Vagina (tissue), 2 donors: ENCODE measurements at regions of chr2 and their contacts with region 1.

Region 1: GRCh38 chr2:101520246-101520645 is 45.3 kb upstream of the RFX8 start:
- DNase-seq: no peak
- H3K4me3 ChIP-seq: no peak overlapping the region
- H3K27ac ChIP-seq: no peak overlapping the region
- H3K4me1 ChIP-seq: peaks cover 12% of the 10 kb centered on the region
- H3K27me3 ChIP-seq: no peaks in the 10 kb centered on the region
- CTCF ChIP-seq: no peak
- POLR2A ChIP-seq: no peak

Region 2: GRCh38 chr2:100502782-100503181 is 1017.5 kb before region 1 on chr2:
- intact Hi-C with region 1: loop called (anchors 5 kb)
- DNase-seq: no peak
- H3K4me3 ChIP-seq: no peak overlapping the region
- H3K27ac ChIP-seq: no peak overlapping the region
- H3K4me1 ChIP-seq: no peaks in the 10 kb centered on the region
- H3K27me3 ChIP-seq: no peaks in the 10 kb centered on the region
- CTCF ChIP-seq: no peak
- POLR2A ChIP-seq: no peak